ENCODE measurements at regions of chr9 and their contacts with region 1.

Region 1: GRCh38 chr9:97921959-97922724 is at the start of gene TRMO:
- DNase-seq: peak; percentile 98 to 99 (median 99)
- H3K4me3 ChIP-seq: peak within 1 kb of the TSS; percentile 86 to 97 (median 95)
- H3K27ac ChIP-seq: peak within 1 kb of the TSS; percentile 100
- H3K4me1 ChIP-seq: peaks cover 0 to 3% (median 2%) of the 10 kb centered on the region in 3 donors
- H3K27me3 ChIP-seq: peaks cover 3% of the 10 kb centered on the region
- CTCF ChIP-seq: peak; percentile 66
- total RNA-seq, gene TRMO: 20.3 TPM

Region 2: GRCh38 chr9:98034593-98035546 is 112.7 kb after region 1 on chr9:
- intact Hi-C with region 1: loop called (anchors 10 kb)
- DNase-seq: peak; percentile 74 to 89 (median 76)
- H3K4me3 ChIP-seq: no peak overlapping the region
- H3K27ac ChIP-seq: no peak overlapping the region
- H3K4me1 ChIP-seq: peaks cover 0 to 3% (median 0%) of the 10 kb centered on the region in 3 donors
- H3K27me3 ChIP-seq: no peaks in the 10 kb centered on the region
- CTCF ChIP-seq: peak; percentile 82

Region 3: DNA sequence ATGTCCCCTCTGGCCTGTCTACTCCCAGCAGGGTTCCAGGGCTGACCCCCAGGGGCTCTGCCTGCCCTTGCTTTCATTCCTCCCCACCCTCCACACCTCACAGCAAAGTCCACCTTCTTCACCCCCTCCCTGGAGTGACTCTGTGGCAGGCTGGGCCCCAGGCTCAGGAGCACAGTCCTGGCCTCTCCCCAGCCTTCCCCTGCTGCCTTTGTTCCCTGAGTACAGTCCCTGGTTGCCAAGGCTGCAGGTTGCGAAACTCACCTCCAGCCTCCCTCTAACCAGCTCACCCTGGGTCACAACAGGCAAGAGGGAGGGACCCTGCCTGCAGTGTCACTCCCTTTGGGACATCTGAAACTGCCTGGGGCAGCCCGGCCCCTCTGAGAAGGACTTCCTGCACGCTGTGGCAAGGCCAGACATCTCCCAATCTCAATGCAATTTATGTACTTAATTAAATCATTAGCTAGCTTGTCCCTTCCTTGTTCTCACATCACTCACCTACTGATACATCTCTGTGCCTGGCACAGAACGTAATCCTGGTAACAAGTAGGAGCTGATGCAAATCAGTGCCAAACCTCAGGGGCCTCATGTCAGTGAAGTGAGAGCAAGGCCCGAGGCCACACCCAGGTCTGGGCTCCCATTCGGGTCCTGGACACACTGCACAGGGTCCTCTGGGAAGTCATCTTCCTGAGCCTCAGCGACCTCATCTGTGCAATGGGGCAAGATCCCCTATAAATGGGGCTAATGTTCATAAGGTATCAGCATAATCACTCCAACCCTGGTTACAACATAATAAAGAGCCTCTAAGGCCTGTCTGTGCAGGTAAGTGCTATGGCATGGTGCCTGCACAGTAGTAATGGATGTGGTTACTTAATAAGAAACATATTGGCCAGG is 224.2 kb after region 1 on chr9:
- intact Hi-C with region 1: no loop called
- DNase-seq: peak; percentile 59 to 94 (median 64)
- H3K4me3 ChIP-seq: no peak overlapping the region
- H3K27ac ChIP-seq: peak overlapping the region in 1 of 2 donors; percentile 17
- H3K4me1 ChIP-seq: peaks cover 0 to 2% (median 0%) of the 10 kb centered on the region in 3 donors
- H3K27me3 ChIP-seq: no peaks in the 10 kb centered on the region
- CTCF ChIP-seq: no peak